HCT116 (cell line): ENCODE measurements at regions of chr12 and their contacts with region 1.

Region 1: GRCh38 chr12:64610149-64610678 is at the start of gene RASSF3:
- DNase-seq: peak; percentile 38
- ATAC-seq: peak; percentile 69
- H3K4me3 ChIP-seq: peak within 1 kb of the TSS; percentile 89 to 96
- H3K27ac ChIP-seq: peak within 1 kb of the TSS; percentile 81
- H3K4me1 ChIP-seq: peaks cover 13 to 40% of the 10 kb centered on the region in 2 experiments
- H3K27me3 ChIP-seq: no peaks in the 10 kb centered on the region
- CTCF ChIP-seq: no peak
- POLR2A ChIP-seq: no peak
- RAD21 ChIP-seq: no peak
- total RNA-seq, gene RASSF3: 67.1 TPM

Region 2: DNA sequence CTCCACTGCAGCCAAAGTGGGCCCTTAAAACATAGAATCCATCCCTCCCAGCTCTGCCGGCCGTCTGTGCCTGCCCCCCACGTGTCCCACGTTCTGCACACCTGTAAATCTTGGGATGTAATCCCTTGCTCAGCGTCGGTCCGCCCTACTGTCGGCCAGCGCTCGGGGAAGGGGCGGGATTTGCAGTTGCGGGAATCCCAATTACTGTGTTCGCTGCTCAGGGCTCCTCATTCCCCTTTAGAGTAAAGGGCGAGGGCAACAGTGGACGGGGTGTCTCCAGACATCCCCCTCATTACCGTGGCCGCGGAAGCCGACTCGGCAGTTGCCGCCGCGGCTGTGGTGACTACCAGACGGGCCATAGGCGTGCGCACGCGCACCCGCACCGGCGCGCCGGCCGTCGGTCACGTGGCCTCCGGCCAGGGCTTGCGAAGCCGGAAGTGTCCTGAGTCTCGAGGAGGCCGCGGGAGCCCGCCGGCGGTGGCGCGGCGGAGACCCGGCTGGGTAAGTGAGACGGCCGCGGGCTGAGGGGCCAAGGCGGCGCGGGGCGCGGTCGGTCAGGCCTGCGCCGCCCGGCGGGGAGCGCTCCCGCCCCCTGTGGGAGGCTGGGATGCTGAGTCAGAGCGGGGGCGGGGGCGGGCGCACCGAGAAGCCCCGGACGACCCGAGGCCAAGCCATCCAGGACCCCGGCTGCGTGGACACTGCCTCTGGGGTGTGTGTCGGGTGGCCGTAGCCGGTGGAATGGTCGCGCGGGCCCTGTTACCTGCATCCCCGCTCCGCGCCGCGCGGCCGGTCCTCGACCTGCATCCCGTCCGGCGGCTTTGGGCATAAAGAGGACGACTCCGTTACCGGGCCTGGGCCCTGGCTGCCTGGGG is 158.3 kb before region 1 on chr12 and contains the start of gene TBK1:
- CTCF ChIA-PET with region 1: no interaction called
- POLR2A ChIA-PET with region 1: interaction called, 3 read pairs
- RAD21 ChIA-PET with region 1: no interaction called
- intact Hi-C with region 1: loop called (anchors 10 kb)
- DNase-seq: peak; percentile 67
- ATAC-seq: peak; percentile 87
- H3K4me3 ChIP-seq: peak within 1 kb of the TSS; percentile 86 to 90
- H3K27ac ChIP-seq: peak within 1 kb of the TSS; percentile 91
- H3K4me1 ChIP-seq: peaks cover 7 to 21% of the 10 kb centered on the region in 2 experiments
- H3K27me3 ChIP-seq: no peaks in the 10 kb centered on the region
- CTCF ChIP-seq: no peak
- POLR2A ChIP-seq: peak; percentile 52
- RAD21 ChIP-seq: no peak
- total RNA-seq, gene TBK1: 27.0 TPM

Region 3: DNA sequence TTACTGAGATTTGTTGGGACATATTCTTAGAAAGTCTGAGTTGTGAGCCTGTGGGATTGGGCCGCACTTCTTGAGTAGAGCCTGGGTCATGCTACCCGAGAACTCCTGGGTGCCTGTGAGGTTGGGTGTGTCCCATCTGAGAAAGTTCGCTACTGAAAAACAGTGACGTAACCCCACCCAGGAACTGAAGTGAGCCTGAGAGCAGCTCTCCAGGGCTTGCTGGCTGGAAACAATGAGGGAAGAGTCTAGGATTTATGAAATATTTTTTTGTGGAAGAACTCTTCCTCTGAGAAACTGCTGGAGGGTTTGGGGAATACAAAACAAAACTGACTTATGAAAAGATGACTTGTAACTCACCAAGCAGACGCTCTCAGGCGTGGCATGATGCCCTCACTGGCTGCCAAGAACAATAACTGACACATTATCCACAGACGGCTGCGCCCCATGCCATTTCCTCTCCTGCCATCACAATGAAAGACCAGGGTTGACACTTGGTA is 69.3 kb after region 1 on chr12:
- CTCF ChIA-PET with region 1: interaction called, 4 read pairs
- POLR2A ChIA-PET with region 1: interaction called, 4 read pairs
- RAD21 ChIA-PET with region 1: no interaction called
- intact Hi-C with region 1: loop called (anchors 2 kb)
- DNase-seq: peak; percentile 74
- ATAC-seq: peak; percentile 86
- H3K4me3 ChIP-seq: peak overlapping the region; percentile 17 to 44
- H3K27ac ChIP-seq: peak overlapping the region; percentile 66
- H3K4me1 ChIP-seq: peaks cover 64 to 73% of the 10 kb centered on the region in 2 experiments
- H3K27me3 ChIP-seq: no peaks in the 10 kb centered on the region
- CTCF ChIP-seq: no peak
- POLR2A ChIP-seq: no peak
- RAD21 ChIP-seq: 0 out of 2 replicates have a peak, but pooled peaks have one; percentile 3